Caco-2 (cell line): ENCODE measurements at regions of chrX and their contacts with region 1.

Region 1: DNA sequence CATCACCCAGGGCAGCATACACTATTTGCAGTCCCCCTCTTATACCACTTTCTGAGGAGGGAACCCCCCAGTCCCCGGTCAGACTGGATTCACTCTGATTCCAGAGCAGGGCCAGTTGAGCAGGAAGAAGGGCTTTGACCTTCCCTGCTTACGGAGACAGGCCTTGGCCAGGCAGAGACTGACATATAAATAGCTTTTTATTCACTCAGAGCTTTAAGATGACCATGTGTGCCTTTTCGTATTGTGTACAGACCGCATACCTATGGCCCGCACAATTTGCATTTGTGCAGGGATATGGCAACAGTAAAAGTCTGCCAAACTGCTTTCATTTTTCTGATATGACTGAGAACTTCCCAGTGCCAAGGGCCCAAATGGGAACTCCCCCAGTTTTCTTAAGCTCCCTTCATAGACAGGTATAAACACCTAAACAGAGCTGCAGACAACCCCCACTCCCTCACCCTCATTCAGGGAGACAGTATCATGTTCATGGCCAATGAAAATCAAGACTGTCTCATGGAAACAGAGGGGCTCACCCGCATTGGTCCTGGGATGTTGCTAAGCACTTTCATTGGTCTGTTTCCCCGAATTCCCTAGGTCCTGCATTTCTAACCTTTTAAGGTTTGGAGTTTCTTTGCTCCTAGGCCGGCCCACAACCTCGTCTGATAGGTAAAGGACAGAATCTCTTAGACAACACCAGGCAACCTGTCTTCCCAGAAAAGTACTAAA is 86.0 kb downstream of the RTL5 start:
- DNase-seq: no peak
- H3K4me3 ChIP-seq: no peak overlapping the region
- H3K4me3 Mint-ChIP-seq: no peak overlapping the region
- H3K27ac Mint-ChIP-seq: no peak overlapping the region
- H3K4me1 ChIP-seq: no peaks in the 10 kb centered on the region
- H3K4me1 Mint-ChIP-seq: no peaks in the 10 kb centered on the region
- H3K27me3 ChIP-seq: no peaks in the 10 kb centered on the region
- H3K27me3 Mint-ChIP-seq: no peaks in the 10 kb centered on the region
- CTCF ChIP-seq: no peak

Region 2: DNA sequence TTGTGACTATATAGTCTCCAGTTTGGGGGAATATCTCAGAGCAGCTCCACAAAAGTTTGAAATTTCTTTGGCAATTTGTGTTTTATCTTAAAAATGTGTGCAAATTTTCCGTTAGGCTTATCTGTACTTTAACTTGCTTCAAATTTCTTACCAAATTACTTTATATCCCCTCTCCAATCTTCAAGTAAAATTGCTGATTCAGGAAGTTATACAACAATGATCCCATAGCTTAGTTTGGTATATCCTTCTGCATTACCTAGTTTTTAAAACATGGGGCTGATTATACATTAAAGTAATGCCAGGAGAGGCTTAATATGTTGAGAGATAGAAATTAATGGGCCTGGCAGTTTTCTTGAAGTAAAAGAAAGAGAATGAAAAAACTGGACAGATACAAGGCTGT is 613.0 kb before region 1 on chrX:
- CTCF ChIA-PET with region 1: no interaction called
- POLR2A ChIA-PET with region 1: no interaction called
- intact Hi-C with region 1: no loop called
- DNase-seq: no peak
- H3K4me3 ChIP-seq: no peak overlapping the region
- H3K4me3 Mint-ChIP-seq: no peak overlapping the region
- H3K27ac Mint-ChIP-seq: no peak overlapping the region
- H3K4me1 ChIP-seq: no peaks in the 10 kb centered on the region
- H3K4me1 Mint-ChIP-seq: no peaks in the 10 kb centered on the region
- H3K27me3 ChIP-seq: no peaks in the 10 kb centered on the region
- H3K27me3 Mint-ChIP-seq: no peaks in the 10 kb centered on the region
- CTCF ChIP-seq: no peak

Region 3: DNA sequence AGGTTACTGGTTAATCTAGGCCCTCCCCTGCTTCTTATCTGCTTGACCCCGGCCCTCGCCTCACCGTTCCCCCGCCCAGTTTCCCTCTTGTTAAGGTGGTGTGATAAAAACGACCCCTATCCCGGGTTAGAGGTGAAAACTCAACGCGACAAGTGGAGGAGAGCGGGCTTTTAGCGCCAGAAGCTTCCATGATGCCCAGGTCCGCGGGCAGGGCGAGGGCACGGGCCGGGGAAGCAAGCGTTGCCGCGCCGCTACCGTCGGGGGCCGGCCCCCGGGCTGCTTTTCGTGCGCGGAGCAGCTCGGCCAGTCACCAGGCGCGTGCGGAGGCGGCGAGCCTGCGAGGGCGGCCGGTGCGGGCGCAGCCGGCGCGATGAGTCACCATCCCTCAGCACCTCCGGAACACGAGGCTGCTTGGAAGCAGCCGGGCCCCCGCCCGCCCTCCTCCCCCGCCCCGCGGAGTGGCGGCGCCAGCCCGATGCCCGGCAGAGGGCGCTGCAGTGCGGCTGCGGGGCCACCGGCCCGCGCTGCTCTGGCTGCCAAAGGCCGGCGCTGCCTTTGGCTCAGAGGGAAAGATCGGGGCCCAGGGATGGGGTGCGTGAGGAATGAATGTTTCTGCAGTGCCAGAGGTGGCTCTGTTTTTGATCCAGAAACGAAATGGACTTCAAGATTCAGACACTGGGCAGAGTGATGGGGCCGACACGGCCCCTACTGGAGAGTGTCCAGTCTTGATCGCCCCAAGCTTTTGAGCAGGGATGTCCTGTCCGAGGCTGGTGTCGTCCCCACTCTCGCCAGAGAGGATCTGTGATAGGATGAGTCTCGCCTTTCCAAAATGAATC is 27.2 kb before region 1 on chrX:
- CTCF ChIA-PET with region 1: no interaction called
- POLR2A ChIA-PET with region 1: no interaction called
- intact Hi-C with region 1: loop called (anchors 1 kb)
- DNase-seq: peak; percentile 81 to 85
- H3K4me3 ChIP-seq: peak overlapping the region; percentile 45
- H3K4me3 Mint-ChIP-seq: peak overlapping the region; percentile 64
- H3K27ac Mint-ChIP-seq: no peak overlapping the region
- H3K4me1 ChIP-seq: 0 out of 2 replicates have a peak, but pooled peaks cover 7% of the 10 kb centered on the region
- H3K4me1 Mint-ChIP-seq: peaks cover 6% of the 10 kb centered on the region
- H3K27me3 ChIP-seq: no peaks in the 10 kb centered on the region
- H3K27me3 Mint-ChIP-seq: no peaks in the 10 kb centered on the region
- CTCF ChIP-seq: peak; percentile 43 to 73

Region 4: GRCh38 chrX:72079607-72080006 is 33.9 kb after region 1 on chrX:
- CTCF ChIA-PET with region 1: no interaction called
- POLR2A ChIA-PET with region 1: no interaction called
- intact Hi-C with region 1: loop called (anchors 5 kb)
- DNase-seq: no peak
- H3K4me3 ChIP-seq: no peak overlapping the region
- H3K4me3 Mint-ChIP-seq: no peak overlapping the region
- H3K27ac Mint-ChIP-seq: no peak overlapping the region
- H3K4me1 ChIP-seq: peaks cover 13% of the 10 kb centered on the region
- H3K4me1 Mint-ChIP-seq: peaks cover 10% of the 10 kb centered on the region
- H3K27me3 ChIP-seq: no peaks in the 10 kb centered on the region
- H3K27me3 Mint-ChIP-seq: no peaks in the 10 kb centered on the region
- CTCF ChIP-seq: no peak

Region 5: DNA sequence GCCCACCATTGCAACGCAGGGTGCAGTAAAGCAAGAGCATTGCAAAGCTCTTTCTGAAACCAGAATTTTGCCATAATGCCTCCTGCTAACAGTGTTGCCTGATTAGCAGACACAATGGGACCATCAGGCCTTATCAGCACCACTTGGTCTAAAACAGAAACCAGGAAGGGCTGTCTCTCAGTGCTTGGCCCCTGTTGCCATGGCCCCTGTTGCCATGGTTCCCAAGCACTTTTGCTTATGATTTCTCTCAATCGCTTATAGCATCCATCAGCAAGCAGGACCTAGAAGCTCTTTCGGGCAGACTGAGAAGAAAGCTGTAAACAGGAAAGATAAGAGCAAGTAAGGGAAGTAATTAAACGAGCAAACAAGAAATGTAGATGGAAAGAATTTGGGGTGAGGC is 49.2 kb after region 1 on chrX:
- CTCF ChIA-PET with region 1: no interaction called
- POLR2A ChIA-PET with region 1: no interaction called
- intact Hi-C with region 1: loop called (anchors 1 kb)
- DNase-seq: no peak
- H3K4me3 ChIP-seq: no peak overlapping the region
- H3K4me3 Mint-ChIP-seq: no peak overlapping the region
- H3K27ac Mint-ChIP-seq: no peak overlapping the region
- H3K4me1 ChIP-seq: no peaks in the 10 kb centered on the region
- H3K4me1 Mint-ChIP-seq: no peaks in the 10 kb centered on the region
- H3K27me3 ChIP-seq: no peaks in the 10 kb centered on the region; the same call in 1 of the 2 replicates
- H3K27me3 Mint-ChIP-seq: peaks cover 3% of the 10 kb centered on the region
- CTCF ChIP-seq: no peak

Region 6: GRCh38 chrX:72126539-72127140 is 80.9 kb after region 1 on chrX:
- CTCF ChIA-PET with region 1: no interaction called
- POLR2A ChIA-PET with region 1: no interaction called
- intact Hi-C with region 1: loop called (anchors 1 kb)
- DNase-seq: peak; percentile 77 to 81
- H3K4me3 ChIP-seq: no peak overlapping the region
- H3K4me3 Mint-ChIP-seq: no peak overlapping the region
- H3K27ac Mint-ChIP-seq: no peak overlapping the region
- H3K4me1 ChIP-seq: no peaks in the 10 kb centered on the region
- H3K4me1 Mint-ChIP-seq: no peaks in the 10 kb centered on the region
- H3K27me3 ChIP-seq: no peaks in the 10 kb centered on the region
- H3K27me3 Mint-ChIP-seq: peaks cover 4% of the 10 kb centered on the region
- CTCF ChIP-seq: peak; percentile 50 to 78